Transverse colon (tissue), 4 donors: ENCODE measurements at regions of chr22 and their contacts with region 1.

Region 1: GRCh38 chr22:50498322-50498890 is 9.1 kb downstream of the LMF2 start:
- DNase-seq: peak; percentile 84
- H3K4me3 ChIP-seq: no peak overlapping the region
- H3K27ac ChIP-seq: peak overlapping the region in 1 of 4 donors; percentile 58
- H3K4me1 ChIP-seq: peaks cover 0 to 18% (median 6%) of the 10 kb centered on the region in 4 donors
- H3K27me3 ChIP-seq: no peaks in the 10 kb centered on the region
- CTCF ChIP-seq: peak; percentile 56 to 72 (median 58)
- EP300 ChIP-seq: no peak
- POLR2A ChIP-seq: no peak

Region 2: DNA sequence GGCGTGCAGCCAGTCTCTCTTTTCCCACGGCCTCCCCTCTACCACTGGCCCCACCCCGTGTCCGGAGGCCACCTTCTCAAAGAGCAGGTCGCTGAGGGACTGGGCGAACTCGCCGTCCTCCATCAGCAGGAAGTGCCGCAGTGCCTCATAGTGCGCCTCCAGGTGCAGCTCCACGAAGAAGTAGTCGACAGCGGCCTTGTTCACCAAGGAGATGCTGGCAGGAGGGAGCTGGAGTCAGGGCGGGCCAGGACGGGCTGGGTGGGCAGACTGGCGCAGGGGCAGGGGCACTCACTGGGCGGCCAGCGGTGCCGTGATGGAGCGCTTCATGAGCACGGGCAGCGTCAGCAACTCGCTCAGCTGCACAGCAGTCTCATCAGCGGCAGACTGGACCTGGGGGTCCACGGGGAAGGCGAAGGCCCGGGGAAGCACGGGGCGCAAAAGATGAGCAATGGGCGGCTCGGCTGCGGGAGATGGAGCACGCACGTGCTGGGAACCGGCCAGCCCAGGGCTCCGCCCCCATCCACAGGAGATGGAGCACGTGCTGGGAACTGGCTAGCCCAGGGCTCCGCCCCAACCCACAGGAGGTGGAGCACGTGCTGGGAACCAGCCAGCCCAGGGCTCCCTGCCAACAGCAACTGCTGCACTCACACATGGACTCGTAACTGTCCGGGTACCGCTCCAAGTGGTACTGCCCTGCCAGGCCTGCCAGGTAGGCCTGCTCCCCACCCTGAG is 279.2 kb before region 1 on chr22:
- in situ Hi-C with region 1: no loop called
- intact Hi-C with region 1: no loop called
- DNase-seq: peak; percentile 89
- H3K4me3 ChIP-seq: no peak overlapping the region
- H3K27ac ChIP-seq: no peak overlapping the region
- H3K4me1 ChIP-seq: peaks cover 0 to 8% (median 2%) of the 10 kb centered on the region in 4 donors
- H3K27me3 ChIP-seq: no peaks in the 10 kb centered on the region
- CTCF ChIP-seq: no peak
- EP300 ChIP-seq: no peak
- POLR2A ChIP-seq: no peak

Region 3: GRCh38 chr22:50260801-50261614 is 237.4 kb before region 1 on chr22:
- in situ Hi-C with region 1: loop called in 1 of 4 experiments (anchors 10 kb)
- intact Hi-C with region 1: no loop called
- DNase-seq: no peak
- H3K4me3 ChIP-seq: peak overlapping the region; percentile 4 to 52 (median 24)
- H3K27ac ChIP-seq: peak overlapping the region; percentile 18 to 41 (median 32)
- H3K4me1 ChIP-seq: peaks cover 0 to 17% (median 11%) of the 10 kb centered on the region in 4 donors
- H3K27me3 ChIP-seq: peaks cover 70% of the 10 kb centered on the region
- CTCF ChIP-seq: no peak
- EP300 ChIP-seq: no peak
- POLR2A ChIP-seq: no peak

Region 4: DNA sequence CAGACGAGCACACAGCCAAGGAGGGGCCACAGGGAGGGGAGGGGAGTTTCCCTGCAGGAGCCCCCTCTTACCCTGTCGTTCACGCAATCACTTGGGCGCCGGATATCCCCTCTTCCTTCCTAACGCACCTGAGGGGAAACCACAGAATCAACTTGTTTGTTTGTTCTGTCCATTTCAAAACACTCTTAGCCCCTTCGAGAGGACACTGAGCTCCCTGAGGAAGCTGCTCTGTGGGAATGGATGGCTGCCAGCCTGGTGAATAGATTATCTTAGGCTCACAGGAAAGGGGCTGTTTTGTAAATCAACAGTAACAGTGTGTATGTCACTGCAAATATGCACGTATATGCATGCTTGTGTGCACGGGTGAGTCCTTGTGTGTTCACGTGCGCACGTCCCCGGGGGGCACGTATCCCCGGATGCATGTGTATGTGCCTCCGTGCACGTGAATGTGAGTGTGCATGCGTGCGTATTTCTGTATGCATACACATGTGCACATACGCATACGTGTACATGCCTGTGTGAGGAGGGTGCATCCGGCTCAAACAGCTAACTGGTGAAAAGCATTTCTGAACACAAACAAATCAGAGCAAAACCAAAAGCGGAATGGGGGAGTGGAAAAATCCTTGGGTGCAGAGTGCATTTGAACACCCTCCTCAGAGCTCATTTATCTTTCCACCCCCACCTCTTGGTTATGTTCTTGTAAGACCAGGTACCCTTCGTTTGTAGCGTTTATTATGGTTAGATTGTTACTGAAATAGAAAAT is 122.4 kb after region 1 on chr22:
- in situ Hi-C with region 1: no loop called
- intact Hi-C with region 1: no loop called
- DNase-seq: peak; percentile 89
- H3K4me3 ChIP-seq: peak overlapping the region in 2 of 4 donors; percentile 27 to 43
- H3K27ac ChIP-seq: peak overlapping the region; percentile 85 to 94 (median 86)
- H3K4me1 ChIP-seq: peaks cover 4 to 29% (median 25%) of the 10 kb centered on the region in 4 donors
- H3K27me3 ChIP-seq: no peaks in the 10 kb centered on the region
- CTCF ChIP-seq: peak in 2 of 5 experiments; percentile 89 to 95
- EP300 ChIP-seq: no peak
- POLR2A ChIP-seq: no peak